ENCODE measurements at regions of chr17 and their contacts with region 1.

Region 1: DNA sequence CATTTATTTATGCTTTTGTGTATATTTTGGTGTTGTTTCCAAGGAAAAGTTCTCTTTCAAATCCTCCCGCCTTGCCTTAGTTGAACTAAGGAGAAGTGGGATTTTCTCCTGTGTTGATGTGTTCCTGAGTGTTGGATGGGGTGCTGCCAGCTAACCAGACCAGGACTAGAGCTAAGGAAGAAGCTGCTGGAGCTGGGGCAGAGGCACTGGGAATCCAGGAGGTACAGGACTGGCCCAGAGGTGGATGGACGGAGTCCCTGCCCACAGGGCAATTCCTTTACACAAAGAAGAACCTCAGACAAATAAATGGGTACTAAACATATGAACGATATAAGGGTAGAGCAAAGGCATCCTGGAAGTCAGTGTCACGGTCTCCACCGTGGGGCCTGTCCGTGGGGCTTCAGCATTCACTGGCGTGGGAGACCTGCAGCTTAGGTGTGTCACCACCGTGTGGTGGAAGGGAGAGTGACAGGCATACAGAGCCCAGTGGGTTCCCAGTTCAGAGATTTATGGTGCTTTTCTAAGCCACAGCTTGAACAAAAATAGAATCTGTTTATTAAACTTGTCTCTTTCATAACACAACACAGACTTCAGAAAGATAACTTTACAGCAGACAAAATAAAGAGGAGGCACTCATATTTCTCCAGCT is 270.7 kb downstream of the NTN1 start:
- DNase-seq: peak; percentile 14
- H3K4me3 Mint-ChIP-seq: no peak overlapping the region
- H3K27ac Mint-ChIP-seq: no peak overlapping the region
- H3K4me1 Mint-ChIP-seq: peaks cover 21% of the 10 kb centered on the region
- H3K27me3 Mint-ChIP-seq: no peaks in the 10 kb centered on the region

Region 2: GRCh38 chr17:9115446-9116191 is 176.4 kb before region 1 on chr17:
- intact Hi-C with region 1: loop called (anchors 5 kb)
- DNase-seq: peak; percentile 30
- H3K4me3 Mint-ChIP-seq: peak overlapping the region; percentile 61
- H3K27ac Mint-ChIP-seq: peak overlapping the region; percentile 65
- H3K4me1 Mint-ChIP-seq: peaks cover 11% of the 10 kb centered on the region
- H3K27me3 Mint-ChIP-seq: no peaks in the 10 kb centered on the region

Region 3: GRCh38 chr17:9217151-9218056 is 74.6 kb before region 1 on chr17:
- intact Hi-C with region 1: no loop called
- DNase-seq: no peak
- H3K4me3 Mint-ChIP-seq: no peak overlapping the region
- H3K27ac Mint-ChIP-seq: no peak overlapping the region
- H3K4me1 Mint-ChIP-seq: no peaks in the 10 kb centered on the region
- H3K27me3 Mint-ChIP-seq: no peaks in the 10 kb centered on the region

Region 4: DNA sequence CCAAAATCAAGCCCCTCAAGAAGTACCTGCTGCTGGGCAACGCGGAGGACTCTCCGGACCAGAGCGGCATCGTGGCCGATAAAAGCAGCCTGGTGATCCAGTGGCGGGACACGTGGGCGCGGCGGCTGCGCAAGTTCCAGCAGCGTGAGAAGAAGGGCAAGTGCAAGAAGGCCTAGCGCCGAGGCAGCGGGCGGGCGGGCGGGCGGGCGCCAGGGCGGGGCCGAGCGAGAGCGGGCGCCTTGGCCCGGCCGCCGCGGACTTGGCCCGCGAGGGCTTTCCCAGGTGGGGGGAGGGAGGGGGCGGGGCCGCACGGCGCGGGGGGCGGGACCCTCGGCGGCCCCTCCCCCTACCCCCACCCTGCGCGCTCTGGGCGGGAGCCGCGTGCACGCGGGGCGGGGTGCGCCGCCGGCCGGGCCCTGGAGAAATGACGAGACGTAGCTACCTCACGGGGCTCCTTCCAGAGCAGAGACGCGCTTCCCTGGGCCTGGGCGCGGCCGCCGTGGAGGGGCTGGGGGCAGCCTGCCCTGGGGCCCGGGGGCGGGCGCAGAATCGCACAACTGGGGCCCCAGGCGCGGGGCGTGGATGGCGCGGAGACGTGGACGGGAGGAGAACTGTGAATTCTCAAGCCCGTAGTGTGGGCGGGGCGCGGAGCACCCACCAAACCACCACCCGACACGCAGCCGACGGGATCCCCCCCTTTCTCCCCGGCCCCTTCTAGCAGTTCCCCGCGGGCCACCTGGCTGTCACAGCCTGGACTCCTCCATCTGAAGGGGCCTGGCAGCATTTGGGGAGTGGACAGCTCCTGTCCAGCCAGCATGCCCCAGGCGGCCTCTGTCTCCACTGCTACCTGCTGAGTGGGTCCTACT is 52.0 kb before region 1 on chr17:
- intact Hi-C with region 1: loop called (anchors 5 kb)
- DNase-seq: peak; percentile 66
- H3K4me3 Mint-ChIP-seq: peak overlapping the region; percentile 70
- H3K27ac Mint-ChIP-seq: peak overlapping the region; percentile 16
- H3K4me1 Mint-ChIP-seq: peaks cover 11% of the 10 kb centered on the region
- H3K27me3 Mint-ChIP-seq: no peaks in the 10 kb centered on the region

Region 5: DNA sequence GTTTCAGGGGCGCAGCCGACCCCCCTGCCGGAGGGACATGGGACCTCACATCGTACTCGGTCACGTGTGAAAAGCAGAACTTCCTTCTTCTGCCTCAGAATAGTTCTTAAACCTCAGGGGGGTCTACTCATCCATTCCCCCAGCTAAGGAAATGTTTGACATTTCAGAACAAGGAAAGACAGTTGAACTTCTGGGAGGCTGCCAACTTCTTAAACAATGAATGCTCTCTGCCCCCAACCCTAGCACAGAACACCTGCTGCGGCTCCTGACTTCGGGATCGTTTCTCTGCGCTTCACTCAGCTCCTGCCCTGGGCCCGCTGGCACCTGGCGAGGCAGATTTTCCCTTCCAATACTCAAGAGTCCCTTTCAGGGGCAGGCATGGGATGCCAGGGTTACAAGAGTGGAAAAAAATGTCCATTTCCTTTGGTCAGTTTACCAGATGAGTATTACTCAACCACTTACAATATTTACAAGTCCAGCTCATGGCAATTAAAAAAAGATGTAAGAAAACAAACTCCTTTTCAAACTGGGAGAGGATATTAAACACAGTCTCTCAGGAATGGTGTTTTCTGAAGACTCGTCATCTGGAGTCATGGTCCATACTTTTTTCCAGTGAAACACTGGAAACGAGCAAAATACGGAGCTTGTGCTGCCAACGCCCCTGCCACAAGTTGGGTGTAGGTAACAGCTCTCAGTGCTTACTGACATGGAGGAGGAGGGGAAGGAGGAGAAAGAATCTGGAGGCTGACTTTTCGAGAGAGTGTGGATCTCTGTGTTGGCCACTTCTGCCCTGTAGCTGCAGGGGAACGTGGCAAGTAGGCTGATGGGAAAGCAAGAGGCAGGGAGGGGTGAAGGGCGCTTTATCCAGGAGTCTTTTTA is 35.0 kb before region 1 on chr17:
- intact Hi-C with region 1: loop called (anchors 1 kb)
- DNase-seq: no peak
- H3K4me3 Mint-ChIP-seq: no peak overlapping the region
- H3K27ac Mint-ChIP-seq: no peak overlapping the region
- H3K4me1 Mint-ChIP-seq: peaks cover 23% of the 10 kb centered on the region
- H3K27me3 Mint-ChIP-seq: no peaks in the 10 kb centered on the region

Region 6: GRCh38 chr17:9273428-9274391 is 18.3 kb before region 1 on chr17:
- intact Hi-C with region 1: loop called (anchors 1 kb)
- DNase-seq: no peak
- H3K4me3 Mint-ChIP-seq: peak overlapping the region; percentile 18
- H3K27ac Mint-ChIP-seq: peak overlapping the region; percentile 72
- H3K4me1 Mint-ChIP-seq: peaks cover 18% of the 10 kb centered on the region
- H3K27me3 Mint-ChIP-seq: no peaks in the 10 kb centered on the region

Region 7: GRCh38 chr17:9363440-9364350 is 71.7 kb after region 1 on chr17:
- intact Hi-C with region 1: loop called (anchors 1 kb)
- DNase-seq: no peak
- H3K4me3 Mint-ChIP-seq: no peak overlapping the region
- H3K27ac Mint-ChIP-seq: no peak overlapping the region
- H3K4me1 Mint-ChIP-seq: peaks cover 9% of the 10 kb centered on the region
- H3K27me3 Mint-ChIP-seq: no peaks in the 10 kb centered on the region

Measured in activated T-helper 2 cell treated with anti-CD3 and anti-CD28 coated beads, Interferon-gamma antibody, Interleukin-2, Interleukin-4, amounts not matched to agents 10 μg/mL and 5 μg/mL and 100 μg/mL, durations not matched to agents 14 hours and 24 hours and 36 hours (primary cell).